Aorta (tissue), 5 donors: ENCODE measurements at regions of chr12 and their contacts with region 1.

Region 1: GRCh38 chr12:54285150-54286041 is 4.9 kb downstream of the HNRNPA1 start:
- DNase-seq: no peak
- ATAC-seq: no peak
- H3K4me3 ChIP-seq: no peak overlapping the region
- H3K27ac ChIP-seq: peak overlapping the region; percentile 4 to 36
- H3K4me1 ChIP-seq: no peaks in the 10 kb centered on the region
- H3K27me3 ChIP-seq: no peaks in the 10 kb centered on the region

Region 2: GRCh38 chr12:53928054-53928835 is 357.2 kb before region 1 on chr12:
- intact Hi-C with region 1: no loop called
- DNase-seq: no peak
- ATAC-seq: no peak
- H3K4me3 ChIP-seq: no peak overlapping the region
- H3K27ac ChIP-seq: no peak overlapping the region
- H3K4me1 ChIP-seq: no peaks in the 10 kb centered on the region
- H3K27me3 ChIP-seq: peaks cover 0 to 10% of the 10 kb centered on the region in 2 donors

Region 3: DNA sequence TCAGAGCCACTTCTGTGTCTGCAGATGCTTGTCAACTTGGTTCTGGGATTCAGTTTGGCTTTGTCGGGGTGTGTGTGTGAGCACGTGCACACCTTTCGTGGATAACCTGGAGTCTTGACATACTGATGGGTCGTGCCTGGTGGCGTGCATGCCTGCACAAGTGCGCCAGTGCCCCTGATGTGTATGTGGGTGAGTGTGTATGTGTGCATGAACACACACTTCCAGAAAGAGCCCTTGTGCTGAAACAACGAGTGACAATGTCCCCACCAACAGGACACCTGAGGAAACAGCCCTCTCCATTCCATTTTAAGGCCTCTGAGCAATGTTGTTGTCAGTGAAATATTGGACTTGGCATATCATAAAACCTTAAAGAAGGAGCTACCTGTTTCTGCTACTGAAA is 150.5 kb before region 1 on chr12:
- intact Hi-C with region 1: no loop called
- DNase-seq: peak in 1 of 2 donors; percentile 54
- ATAC-seq: no peak
- H3K4me3 ChIP-seq: no peak overlapping the region
- H3K27ac ChIP-seq: no peak overlapping the region
- H3K4me1 ChIP-seq: no peaks in the 10 kb centered on the region
- H3K27me3 ChIP-seq: no peaks in the 10 kb centered on the region

Region 4: GRCh38 chr12:54251667-54252284 is 33.6 kb before region 1 on chr12:
- intact Hi-C with region 1: loop called in 1 of 2 experiments (anchors 5 kb)
- DNase-seq: no peak
- ATAC-seq: peak; percentile 76
- H3K4me3 ChIP-seq: no peak overlapping the region
- H3K27ac ChIP-seq: no peak overlapping the region
- H3K4me1 ChIP-seq: no peaks in the 10 kb centered on the region
- H3K27me3 ChIP-seq: no peaks in the 10 kb centered on the region